Cardiac septum (tissue), 1 donor: ENCODE measurements at regions of chr10 and their contacts with region 1.

Region 1: DNA sequence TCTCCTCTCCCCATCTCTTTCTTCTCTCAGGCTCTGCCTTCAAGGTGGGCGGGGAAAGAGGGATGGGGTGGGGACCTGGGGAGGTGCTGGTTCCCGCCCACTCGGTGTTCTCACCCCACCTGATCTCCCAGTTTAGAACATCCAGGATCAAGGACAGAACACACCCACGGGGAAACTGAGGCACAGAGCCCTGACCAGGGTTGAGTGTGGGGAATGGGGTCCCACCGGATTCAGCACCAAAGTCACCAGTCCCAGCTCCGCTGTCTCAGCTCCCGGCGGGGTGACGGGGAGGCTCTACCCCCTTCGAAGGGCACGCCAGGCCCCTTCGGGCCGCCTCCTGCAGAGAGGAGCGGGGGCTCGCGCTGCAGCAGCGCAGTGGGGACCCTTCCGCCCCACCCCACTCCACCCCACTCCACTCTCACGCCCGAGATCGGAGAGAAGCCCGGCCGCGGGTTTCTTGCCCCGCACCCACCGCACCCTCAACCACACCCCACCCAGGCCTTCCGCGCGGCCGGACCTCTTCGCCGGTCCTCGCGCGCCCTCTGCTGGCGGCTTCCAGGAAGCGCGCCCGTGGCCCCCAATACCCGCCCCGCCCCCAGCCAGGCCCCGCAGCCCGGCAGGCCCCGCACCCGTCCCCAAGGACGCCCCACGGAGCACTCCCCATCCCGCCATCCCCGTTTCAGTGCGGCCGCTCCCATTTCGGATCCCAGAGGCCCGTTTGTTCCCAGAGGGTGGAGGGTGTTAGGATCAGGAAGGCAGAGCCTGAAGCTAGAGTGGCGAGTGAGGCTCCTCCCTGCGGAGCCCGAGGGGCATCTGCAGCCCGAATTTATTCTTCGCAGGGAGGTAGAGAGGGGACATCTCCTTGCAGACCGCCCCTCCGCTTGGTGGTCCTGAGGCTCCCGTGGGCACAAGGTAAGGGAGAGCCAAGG is 18.0 kb downstream of the POLL start:
- DNase-seq: peak; percentile 90

Region 2: GRCh38 chr10:101161494-101162299 is 408.4 kb before region 1 on chr10:
- intact Hi-C with region 1: loop called (anchors 5 kb)
- DNase-seq: peak; percentile 82

Region 3: DNA sequence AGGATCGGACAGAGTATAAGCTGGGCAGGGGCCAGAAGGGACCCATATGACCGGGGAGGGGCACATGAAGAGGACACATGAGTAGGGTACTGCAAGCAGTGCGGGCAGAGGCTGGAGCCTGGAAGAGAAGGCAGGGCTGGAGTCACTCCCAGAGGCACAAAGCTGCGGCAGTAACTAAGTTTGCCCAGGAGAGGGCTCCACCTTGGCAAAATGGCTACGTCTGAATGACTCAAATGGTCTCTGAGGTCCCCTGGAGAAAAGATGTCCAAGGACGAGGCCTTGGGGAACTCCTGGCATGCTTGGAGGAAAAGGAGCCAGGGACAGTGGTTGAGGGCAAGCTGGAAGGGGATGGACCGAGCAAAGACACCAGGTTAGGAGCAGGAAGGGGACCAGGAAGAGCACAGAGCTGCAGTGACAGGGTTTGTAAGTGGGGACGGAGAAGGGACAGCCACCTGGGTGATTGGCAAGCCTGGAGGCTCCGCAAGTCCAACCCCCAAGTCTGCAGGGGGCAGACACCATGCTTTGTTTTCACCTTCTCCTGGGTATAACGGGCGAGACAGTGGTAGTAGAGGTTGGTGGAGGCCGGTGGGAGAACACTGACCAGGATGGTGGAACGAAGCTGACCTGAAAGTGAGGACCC is 297.8 kb before region 1 on chr10:
- intact Hi-C with region 1: loop called (anchors 10 kb)
- DNase-seq: no peak

Region 4: DNA sequence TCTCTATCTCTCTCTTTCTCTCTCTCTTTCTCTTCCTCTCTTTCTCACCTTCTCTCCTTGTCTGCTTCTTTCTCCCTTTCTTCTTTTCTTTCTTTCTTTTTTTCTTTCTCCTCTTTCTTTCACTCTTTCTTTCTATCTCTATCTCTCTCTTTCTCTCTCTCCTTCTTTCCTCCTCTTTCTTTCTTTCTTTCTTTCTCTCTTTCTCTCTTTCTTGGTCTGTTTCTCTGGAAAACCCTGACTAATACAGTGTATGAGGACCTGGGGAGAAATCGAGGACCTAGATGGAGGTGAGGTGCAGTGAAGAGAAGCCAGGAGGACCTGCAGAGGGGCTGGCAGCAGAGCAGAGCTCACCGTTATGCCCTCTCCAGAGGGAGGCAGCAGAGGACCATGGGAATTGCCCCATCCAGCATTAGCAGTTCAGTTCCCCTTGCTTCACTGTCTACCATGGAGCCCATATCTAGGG is 268.8 kb before region 1 on chr10:
- intact Hi-C with region 1: loop called (anchors 5 kb)
- DNase-seq: no peak